Gastrocnemius medialis (tissue), 4 donors: ENCODE measurements at regions of chr21 and their contacts with region 1.

Region 1: GRCh38 chr21:40792691-40793456 is 54.1 kb downstream of the DSCAM start:
- DNase-seq: no peak
- ATAC-seq: no peak
- H3K4me3 ChIP-seq: no peak overlapping the region
- H3K27ac ChIP-seq: no peak overlapping the region
- H3K4me1 ChIP-seq: no peaks in the 10 kb centered on the region
- H3K27me3 ChIP-seq: no peaks in the 10 kb centered on the region
- CTCF ChIP-seq: no peak
- POLR2A ChIP-seq: no peak

Region 2: GRCh38 chr21:40772831-40773230 is 20.0 kb before region 1 on chr21:
- in situ Hi-C with region 1: no loop called
- intact Hi-C with region 1: loop called (anchors 1 kb)
- DNase-seq: no peak
- ATAC-seq: no peak
- H3K4me3 ChIP-seq: no peak overlapping the region
- H3K27ac ChIP-seq: no peak overlapping the region
- H3K4me1 ChIP-seq: no peaks in the 10 kb centered on the region
- H3K27me3 ChIP-seq: no peaks in the 10 kb centered on the region
- CTCF ChIP-seq: no peak
- POLR2A ChIP-seq: no peak